ENCODE measurements at regions of chr19 and their contacts with region 1.

Region 1: GRCh38 chr19:41376241-41376997 is at the start of gene TMEM91:
- DNase-seq: no peak
- H3K4me3 ChIP-seq: peak within 1 kb of the TSS; percentile 65 to 86 (median 72)
- H3K27ac ChIP-seq: peak within 1 kb of the TSS; percentile 83 to 93
- H3K4me1 ChIP-seq: peaks cover 8 to 14% of the 10 kb centered on the region in 2 donors
- H3K27me3 ChIP-seq: no peaks in the 10 kb centered on the region
- CTCF ChIP-seq: no peak
- POLR2A ChIP-seq: no peak
- total RNA-seq, gene TMEM91: 15.7 to 29.2 (median 17.0) TPM

Region 2: DNA sequence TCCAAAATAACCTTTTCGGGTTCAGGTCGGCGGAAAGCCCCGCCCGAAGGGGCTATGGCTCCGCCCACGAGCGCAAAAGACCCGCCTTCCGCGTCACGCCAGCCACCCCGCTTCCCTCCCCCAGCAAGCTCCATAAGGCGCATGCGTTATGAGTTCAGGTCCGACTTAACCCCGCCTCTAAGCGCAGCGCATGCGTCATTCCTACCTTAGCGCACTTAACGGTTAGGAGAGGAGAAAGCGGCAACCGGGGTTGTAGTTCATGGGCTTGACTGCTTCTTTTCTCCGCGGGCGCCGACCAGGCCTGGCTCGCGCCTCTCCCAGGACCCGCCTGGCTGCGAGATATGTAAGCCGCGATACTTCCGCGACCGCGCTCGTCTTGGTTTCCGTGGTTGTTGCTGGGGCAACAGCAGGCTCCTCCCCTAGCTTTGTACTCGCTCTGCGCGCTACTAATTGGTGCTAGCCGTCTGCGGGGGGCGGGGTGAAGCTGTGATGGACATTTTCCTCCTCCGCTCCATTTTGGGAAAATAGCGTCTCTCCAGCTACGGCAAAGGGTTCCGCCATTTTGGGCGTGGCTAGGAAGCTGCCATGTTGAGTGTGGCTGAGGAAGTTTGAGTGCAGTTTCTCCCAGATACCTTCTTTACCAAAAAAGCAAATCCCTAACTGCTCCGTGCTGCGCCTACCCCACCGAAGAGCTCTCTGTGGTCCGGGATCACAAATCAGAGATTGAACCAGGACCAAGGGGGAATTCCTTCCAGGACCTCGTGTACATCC is 12.5 kb before region 1 on chr19 and contains the start of gene B9D2:
- intact Hi-C with region 1: loop called (anchors 1 kb)
- DNase-seq: peak; percentile 97 to 98
- H3K4me3 ChIP-seq: peak within 1 kb of the TSS; percentile 74 to 85 (median 75)
- H3K27ac ChIP-seq: peak within 1 kb of the TSS; percentile 97 to 99
- H3K4me1 ChIP-seq: no peaks in the 10 kb centered on the region
- H3K27me3 ChIP-seq: no peaks in the 10 kb centered on the region
- CTCF ChIP-seq: peak in 1 of 3 donors; percentile 9
- POLR2A ChIP-seq: peak; percentile 45
- total RNA-seq, gene B9D2: 4.0 to 7.3 (median 4.3) TPM